Endothelial cell of umbilical vein (primary cell): ENCODE measurements at regions of chr19 and their contacts with region 1.

Region 1: GRCh38 chr19:1241417-1242095 is at the start of gene ATP5F1D:
- DNase-seq: peak; percentile 91
- H3K4me3 ChIP-seq: peak within 1 kb of the TSS; percentile 38 to 74 (median 58)
- H3K27ac ChIP-seq: peak within 1 kb of the TSS; percentile 36
- H3K4me1 ChIP-seq: peaks cover 12% of the 10 kb centered on the region
- H3K27me3 ChIP-seq: no peaks in the 10 kb centered on the region
- CTCF ChIP-seq: no peak
- POLR2A ChIP-seq: peak; percentile 64
- total RNA-seq, gene ATP5F1D: 190 and 192 TPM in 2 replicates

Region 2: DNA sequence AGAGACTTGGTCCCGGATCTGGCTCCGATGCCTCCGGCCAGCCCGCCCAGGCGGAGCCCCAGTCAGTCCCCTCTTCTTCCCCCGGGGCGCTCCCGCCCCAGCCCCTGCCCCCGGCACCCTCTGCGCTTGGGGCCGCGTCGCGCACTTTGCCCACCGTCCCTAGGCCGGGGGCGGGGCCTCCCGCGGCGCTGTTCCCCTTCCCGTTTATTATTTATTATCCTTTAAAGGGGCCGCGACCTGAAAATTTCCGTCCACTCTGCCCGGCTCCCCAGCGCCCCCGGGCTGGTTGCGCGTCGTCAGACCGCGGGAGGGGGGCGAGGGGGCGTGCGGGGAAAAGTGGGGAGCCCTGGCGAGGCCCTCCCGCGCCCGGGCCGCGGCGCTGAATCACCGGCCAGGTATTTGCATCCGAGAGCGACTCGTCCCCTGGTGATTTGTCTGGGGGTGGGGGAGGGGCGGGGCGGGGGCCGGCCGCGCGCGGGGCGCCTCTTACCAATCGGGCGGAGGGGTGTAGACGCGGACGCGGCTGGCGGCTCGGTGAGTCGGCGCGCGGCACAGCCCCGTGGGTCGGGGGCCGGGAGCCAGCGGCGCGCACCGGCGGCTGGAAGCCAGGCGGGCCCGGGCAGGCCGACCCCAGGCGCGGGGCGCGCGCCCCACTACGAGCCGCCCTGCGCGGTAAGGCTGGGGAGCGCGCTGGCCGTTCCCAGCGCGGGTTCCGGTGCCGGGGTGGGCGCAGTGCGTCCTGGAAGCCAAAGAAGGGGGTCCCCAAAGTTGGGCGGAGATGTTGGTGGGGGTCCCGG is 315.8 kb before region 1 on chr19 and contains the start of gene ARID3A:
- CTCF ChIA-PET with region 1: no interaction called
- POLR2A ChIA-PET with region 1: no interaction called
- dilution Hi-C with region 1: no loop called
- intact Hi-C with region 1: loop called (anchors 5 kb)
- DNase-seq: peak; percentile 79
- H3K4me3 ChIP-seq: peak within 1 kb of the TSS; percentile 69 to 95 (median 85)
- H3K27ac ChIP-seq: peak within 1 kb of the TSS; percentile 86
- H3K4me1 ChIP-seq: peaks cover 6% of the 10 kb centered on the region
- H3K27me3 ChIP-seq: peaks cover 1% of the 10 kb centered on the region in 2 experiments
- CTCF ChIP-seq: no peak
- POLR2A ChIP-seq: no peak
- total RNA-seq, gene ARID3A: 10.8 and 13.2 TPM in 2 replicates

Region 3: DNA sequence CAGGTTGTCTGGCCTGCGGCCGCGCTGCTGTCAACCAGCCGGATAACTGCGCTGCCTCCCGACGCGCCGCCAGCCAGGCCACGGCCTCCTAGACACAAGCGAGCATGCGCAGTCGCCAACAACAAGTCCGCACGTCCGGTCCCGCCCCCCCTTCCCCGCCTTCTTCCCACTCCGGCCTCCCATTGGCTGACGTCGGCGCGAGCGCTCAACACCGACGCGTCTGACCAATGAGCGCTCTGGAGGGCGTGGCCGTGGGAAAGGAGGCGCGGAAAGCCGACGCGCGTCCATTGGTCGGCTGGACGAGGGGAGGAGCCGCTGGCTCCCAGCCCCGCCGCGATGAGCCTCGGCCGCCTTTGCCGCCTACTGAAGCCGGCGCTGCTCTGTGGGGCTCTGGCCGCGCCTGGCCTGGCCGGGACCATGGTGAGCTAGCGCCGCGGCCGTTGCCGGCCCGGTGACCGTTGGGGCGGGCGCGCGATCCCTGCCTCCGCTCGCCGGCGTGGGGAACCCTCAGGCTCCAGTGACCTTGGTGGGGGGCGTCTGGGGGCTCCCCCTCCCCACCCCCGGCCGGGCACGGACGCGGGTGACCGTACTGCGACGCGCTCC is 137.7 kb before region 1 on chr19 and contains the start of gene GPX4:
- CTCF ChIA-PET with region 1: interaction called, 6 read pairs
- POLR2A ChIA-PET with region 1: no interaction called
- dilution Hi-C with region 1: no loop called
- intact Hi-C with region 1: loop called (anchors 2 kb)
- DNase-seq: peak; percentile 99
- H3K4me3 ChIP-seq: peak within 1 kb of the TSS; percentile 33 to 58 (median 52)
- H3K27ac ChIP-seq: peak within 1 kb of the TSS; percentile 93
- H3K4me1 ChIP-seq: peaks cover 31% of the 10 kb centered on the region
- H3K27me3 ChIP-seq: no peaks in the 10 kb centered on the region
- CTCF ChIP-seq: no peak
- POLR2A ChIP-seq: peak; percentile 99
- total RNA-seq, gene GPX4: 445 and 469 TPM in 2 replicates

Region 4: GRCh38 chr19:1205114-1206062 is 36.2 kb before region 1 on chr19 and contains the start of gene STK11:
- CTCF ChIA-PET with region 1: interaction called, 12 read pairs
- POLR2A ChIA-PET with region 1: no interaction called
- dilution Hi-C with region 1: no loop called
- intact Hi-C with region 1: no loop called
- DNase-seq: peak; percentile 97
- H3K4me3 ChIP-seq: peak within 1 kb of the TSS; percentile 76 to 88 (median 86)
- H3K27ac ChIP-seq: peak within 1 kb of the TSS; percentile 35
- H3K4me1 ChIP-seq: peaks cover 22% of the 10 kb centered on the region
- H3K27me3 ChIP-seq: no peaks in the 10 kb centered on the region
- CTCF ChIP-seq: no peak
- POLR2A ChIP-seq: peak; percentile 64
- total RNA-seq, gene STK11: 67.1 and 75.4 TPM in 2 replicates

Region 5: DNA sequence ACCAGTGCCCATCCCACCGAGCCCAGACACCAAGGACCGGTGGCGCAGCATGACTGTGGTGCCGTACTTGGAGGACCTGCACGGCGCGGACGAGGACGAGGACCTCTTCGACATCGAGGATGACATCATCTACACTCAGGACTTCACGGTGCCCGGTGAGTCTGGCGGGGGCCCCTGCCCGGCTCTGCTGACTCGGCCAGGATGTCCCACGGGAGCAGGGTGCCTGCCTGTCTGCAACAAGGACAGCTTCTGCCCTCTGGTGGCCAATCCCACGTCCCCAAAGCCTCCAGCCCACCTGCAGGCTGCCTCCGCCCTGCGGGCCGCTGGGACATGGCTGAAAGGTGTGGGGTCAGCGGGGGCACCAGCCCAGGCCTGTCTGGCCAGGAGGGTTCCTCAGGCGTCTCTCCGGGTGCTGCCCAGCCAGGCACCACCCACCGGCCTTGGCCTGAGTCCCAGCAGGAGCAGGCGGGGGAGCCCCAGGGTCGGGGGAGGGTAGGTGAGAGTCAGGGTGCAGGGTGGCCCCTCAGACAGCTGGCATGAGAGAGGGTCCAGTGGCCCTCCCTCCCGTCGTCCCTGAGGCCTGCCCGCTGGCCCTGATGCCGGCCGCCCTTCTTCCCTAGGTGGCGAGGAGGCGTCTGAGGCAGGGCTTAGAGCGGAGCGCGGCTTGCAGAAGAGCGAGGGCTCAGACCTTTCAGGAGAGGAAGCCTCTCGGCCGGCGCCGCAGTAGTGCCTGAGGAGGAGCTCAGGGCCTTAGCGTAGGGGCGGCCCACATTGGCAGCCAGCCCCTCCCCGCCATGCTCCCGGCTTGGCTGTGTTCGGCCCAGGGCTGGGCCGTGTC is 18.3 kb before region 1 on chr19:
- CTCF ChIA-PET with region 1: interaction called, 9 read pairs
- POLR2A ChIA-PET with region 1: no interaction called
- dilution Hi-C with region 1: no loop called
- intact Hi-C with region 1: loop called (anchors 1 kb)
- DNase-seq: no peak
- H3K4me3 ChIP-seq: no peak overlapping the region
- H3K27ac ChIP-seq: no peak overlapping the region
- H3K4me1 ChIP-seq: no peaks in the 10 kb centered on the region
- H3K27me3 ChIP-seq: no peaks in the 10 kb centered on the region
- CTCF ChIP-seq: peak; percentile 52 to 55
- POLR2A ChIP-seq: no peak

Region 6: DNA sequence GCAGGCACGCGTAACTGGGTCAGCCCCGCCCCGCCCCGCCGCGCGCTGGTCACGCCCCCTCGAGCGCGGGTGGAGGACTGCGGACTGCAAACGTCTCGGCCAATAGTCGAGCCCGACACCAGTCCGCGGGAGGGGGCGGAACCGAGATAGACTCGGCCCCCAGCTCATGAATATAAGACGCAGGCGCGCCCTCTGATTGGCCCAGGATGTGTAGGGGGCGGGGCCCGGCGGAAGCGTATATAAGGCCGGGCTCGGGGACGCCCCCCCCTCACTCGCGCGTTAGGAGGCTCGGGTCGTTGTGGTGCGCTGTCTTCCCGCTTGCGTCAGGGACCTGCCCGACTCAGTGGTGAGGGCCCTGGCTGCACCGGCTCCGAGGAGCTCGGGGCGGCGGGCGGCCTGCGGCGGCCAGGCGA is 27.5 kb after region 1 on chr19 and contains the start of gene CIRBP:
- CTCF ChIA-PET with region 1: interaction called, 1,001 read pairs
- POLR2A ChIA-PET with region 1: interaction called, 87 read pairs
- dilution Hi-C with region 1: no loop called
- intact Hi-C with region 1: loop called (anchors 1 kb)
- DNase-seq: peak; percentile 99
- H3K4me3 ChIP-seq: peak within 1 kb of the TSS; percentile 61 to 90 (median 76)
- H3K27ac ChIP-seq: peak within 1 kb of the TSS; percentile 93
- H3K4me1 ChIP-seq: peaks cover 38% of the 10 kb centered on the region
- H3K27me3 ChIP-seq: no peaks in the 10 kb centered on the region
- CTCF ChIP-seq: no peak
- POLR2A ChIP-seq: peak; percentile 99
- total RNA-seq, gene CIRBP: 225 and 229 TPM in 2 replicates

Region 7: DNA sequence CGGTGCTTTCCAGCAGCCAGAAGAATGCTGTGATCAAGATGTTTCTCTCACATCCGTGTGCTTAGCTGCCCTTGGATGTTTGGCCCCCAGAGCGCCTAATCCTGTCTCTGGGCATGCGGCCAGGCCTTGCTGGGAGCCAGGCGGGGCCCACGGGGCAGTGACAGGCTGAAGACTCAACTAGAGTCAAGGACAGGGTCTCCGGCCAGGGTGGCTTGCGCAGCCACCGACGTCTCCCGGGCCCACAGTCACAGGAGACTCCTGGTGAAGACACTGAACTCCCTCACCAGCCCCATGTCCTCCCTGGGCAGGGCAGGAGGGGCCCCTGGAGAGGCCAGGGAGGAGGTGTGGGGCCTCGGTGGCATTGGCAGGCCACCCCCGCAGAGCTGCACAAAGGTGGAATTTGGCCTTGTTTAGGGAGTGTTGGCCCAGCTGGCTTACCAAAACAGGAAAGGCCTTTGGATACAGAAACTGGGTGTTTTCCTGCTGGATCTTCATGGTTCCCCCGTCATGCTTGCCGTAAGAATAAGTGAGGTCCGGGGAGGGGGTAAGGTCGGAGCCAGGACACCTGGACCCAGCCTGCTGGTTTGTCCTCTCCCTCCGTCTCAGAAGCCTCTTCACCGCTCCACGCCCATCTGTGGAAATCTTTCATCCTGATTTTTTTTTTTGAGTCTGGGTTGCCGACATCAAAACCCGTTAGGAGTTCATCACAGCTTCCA is 132.1 kb after region 1 on chr19:
- CTCF ChIA-PET with region 1: interaction called, 13 read pairs
- POLR2A ChIA-PET with region 1: no interaction called
- dilution Hi-C with region 1: no loop called
- intact Hi-C with region 1: no loop called
- DNase-seq: no peak
- H3K4me3 ChIP-seq: no peak overlapping the region
- H3K27ac ChIP-seq: no peak overlapping the region
- H3K4me1 ChIP-seq: no peaks in the 10 kb centered on the region
- H3K27me3 ChIP-seq: no peaks in the 10 kb centered on the region
- CTCF ChIP-seq: no peak
- POLR2A ChIP-seq: no peak

Region 8: GRCh38 chr19:1624458-1624857 is 382.9 kb after region 1 on chr19:
- CTCF ChIA-PET with region 1: no interaction called
- POLR2A ChIA-PET with region 1: no interaction called
- dilution Hi-C with region 1: no loop called
- intact Hi-C with region 1: no loop called
- DNase-seq: peak; percentile 67
- H3K4me3 ChIP-seq: no peak overlapping the region
- H3K27ac ChIP-seq: peak overlapping the region; percentile 29
- H3K4me1 ChIP-seq: no peaks in the 10 kb centered on the region
- H3K27me3 ChIP-seq: no peaks in the 10 kb centered on the region
- CTCF ChIP-seq: peak; percentile 79 to 83
- POLR2A ChIP-seq: no peak